Naive thymus-derived CD4-positive, alpha-beta T cell (primary cell): ENCODE measurements at regions of chr1 and their contacts with region 1.

Region 1: GRCh38 chr1:184701816-184702215 is 52.8 kb downstream of the EDEM3 start:
- DNase-seq: no peak
- ATAC-seq: no peak
- H3K4me3 ChIP-seq: no peak overlapping the region
- H3K4me3 Mint-ChIP-seq: no peak overlapping the region
- H3K27ac ChIP-seq: no peak overlapping the region
- H3K27ac Mint-ChIP-seq: peak overlapping the region in 2 of 9 donors; percentile 15 to 51
- H3K4me1 ChIP-seq: no peaks in the 10 kb centered on the region
- H3K4me1 Mint-ChIP-seq: peaks cover 0 to 18% (median 9%) of the 10 kb centered on the region in 7 donors
- H3K27me3 ChIP-seq: no peaks in the 10 kb centered on the region
- H3K27me3 Mint-ChIP-seq: no peaks in the 10 kb centered on the region

Region 2: DNA sequence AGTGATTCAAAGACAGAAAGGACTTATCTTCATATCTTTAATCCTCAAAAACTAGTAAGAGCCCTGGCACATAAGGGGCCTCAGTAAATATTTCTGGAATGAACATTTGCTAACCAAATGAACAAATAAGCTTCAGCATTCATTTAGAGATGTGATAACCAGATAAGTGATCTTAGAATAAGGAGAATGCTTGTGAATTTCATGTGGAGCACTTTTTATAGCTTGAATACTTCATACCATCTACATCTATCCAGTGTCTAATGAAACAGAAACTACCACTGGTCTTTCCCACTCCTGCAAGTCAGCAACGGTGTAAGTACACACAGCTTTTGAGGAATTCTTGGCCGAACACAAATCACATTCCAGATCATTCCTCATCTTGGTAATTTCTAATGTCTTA is 14.3 kb after region 1 on chr1:
- CTCF ChIA-PET with region 1: no interaction called
- POLR2A ChIA-PET with region 1: no interaction called
- intact Hi-C with region 1: loop called in 1 of 2 experiments (anchors 2 kb)
- DNase-seq: no peak
- ATAC-seq: no peak
- H3K4me3 ChIP-seq: no peak overlapping the region
- H3K4me3 Mint-ChIP-seq: no peak overlapping the region
- H3K27ac ChIP-seq: no peak overlapping the region
- H3K27ac Mint-ChIP-seq: peak overlapping the region in 4 of 9 donors; percentile 6 to 48 (median 14)
- H3K4me1 ChIP-seq: no peaks in the 10 kb centered on the region
- H3K4me1 Mint-ChIP-seq: peaks cover 0 to 5% (median 0%) of the 10 kb centered on the region in 7 donors
- H3K27me3 ChIP-seq: no peaks in the 10 kb centered on the region
- H3K27me3 Mint-ChIP-seq: no peaks in the 10 kb centered on the region

Region 3: DNA sequence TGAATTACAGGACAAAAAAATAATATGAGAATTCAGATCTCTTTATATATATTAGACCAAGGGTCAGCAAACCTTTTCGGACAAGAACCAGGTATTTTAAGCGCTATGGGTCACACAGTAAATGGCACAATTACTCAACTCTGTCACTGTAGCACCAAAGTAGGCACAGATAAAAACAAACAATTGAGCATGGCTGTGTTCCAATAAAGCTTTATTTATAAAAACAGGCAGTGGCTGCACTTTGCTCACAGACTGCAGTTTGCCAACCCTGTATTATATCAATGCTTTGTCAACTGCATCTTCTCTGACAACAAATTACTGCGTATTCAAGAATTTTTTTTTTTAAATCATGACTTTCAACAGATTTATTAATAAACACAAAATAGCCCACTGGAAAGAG is 23.0 kb after region 1 on chr1:
- CTCF ChIA-PET with region 1: no interaction called
- POLR2A ChIA-PET with region 1: no interaction called
- intact Hi-C with region 1: loop called in 1 of 2 experiments (anchors 2 kb)
- DNase-seq: no peak
- ATAC-seq: no peak
- H3K4me3 ChIP-seq: no peak overlapping the region
- H3K4me3 Mint-ChIP-seq: no peak overlapping the region
- H3K27ac ChIP-seq: no peak overlapping the region
- H3K27ac Mint-ChIP-seq: no peak overlapping the region
- H3K4me1 ChIP-seq: no peaks in the 10 kb centered on the region
- H3K4me1 Mint-ChIP-seq: peaks cover 0 to 19% (median 3%) of the 10 kb centered on the region in 7 donors
- H3K27me3 ChIP-seq: no peaks in the 10 kb centered on the region
- H3K27me3 Mint-ChIP-seq: no peaks in the 10 kb centered on the region

Region 4: GRCh38 chr1:184734980-184735379 is 33.2 kb after region 1 on chr1:
- CTCF ChIA-PET with region 1: no interaction called
- POLR2A ChIA-PET with region 1: no interaction called
- intact Hi-C with region 1: loop called in 1 of 2 experiments (anchors 5 kb)
- DNase-seq: no peak
- ATAC-seq: no peak
- H3K4me3 ChIP-seq: no peak overlapping the region
- H3K4me3 Mint-ChIP-seq: no peak overlapping the region
- H3K27ac ChIP-seq: no peak overlapping the region
- H3K27ac Mint-ChIP-seq: peak overlapping the region in 1 of 9 donors; percentile 2
- H3K4me1 ChIP-seq: no peaks in the 10 kb centered on the region
- H3K4me1 Mint-ChIP-seq: peaks cover 9 to 33% (median 18%) of the 10 kb centered on the region in 7 donors
- H3K27me3 ChIP-seq: no peaks in the 10 kb centered on the region
- H3K27me3 Mint-ChIP-seq: no peaks in the 10 kb centered on the region

Region 5: DNA sequence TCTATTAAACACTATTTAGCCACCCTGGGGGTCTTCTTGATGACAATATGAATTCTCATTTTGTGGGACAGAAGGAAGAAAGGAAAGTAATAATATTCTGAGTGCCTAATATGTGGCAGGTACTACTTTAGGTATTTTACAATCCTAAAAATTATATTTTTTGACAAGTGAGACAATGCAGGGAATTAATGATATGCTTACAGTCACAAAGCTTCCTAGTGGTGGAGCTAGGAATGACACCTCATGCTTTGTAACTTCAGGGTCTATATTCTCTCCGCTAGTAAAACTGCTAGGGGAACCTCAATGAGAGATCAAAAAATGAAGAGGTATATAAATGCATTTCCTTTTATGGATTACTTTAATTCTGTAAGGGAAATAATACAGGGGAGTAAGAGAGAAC is 1628.9 kb after region 1 on chr1:
- CTCF ChIA-PET with region 1: no interaction called
- POLR2A ChIA-PET with region 1: no interaction called
- intact Hi-C with region 1: loop called in 1 of 2 experiments (anchors 10 kb)
- DNase-seq: no peak
- ATAC-seq: no peak
- H3K4me3 ChIP-seq: no peak overlapping the region
- H3K4me3 Mint-ChIP-seq: no peak overlapping the region
- H3K27ac ChIP-seq: no peak overlapping the region
- H3K27ac Mint-ChIP-seq: peak overlapping the region in 4 of 9 donors; percentile 28 to 67 (median 49)
- H3K4me1 ChIP-seq: no peaks in the 10 kb centered on the region
- H3K4me1 Mint-ChIP-seq: peaks cover 0 to 9% (median 4%) of the 10 kb centered on the region in 7 donors
- H3K27me3 ChIP-seq: no peaks in the 10 kb centered on the region
- H3K27me3 Mint-ChIP-seq: no peaks in the 10 kb centered on the region